ENCODE measurements at regions of chr19 and their contacts with region 1.

Region 1: DNA sequence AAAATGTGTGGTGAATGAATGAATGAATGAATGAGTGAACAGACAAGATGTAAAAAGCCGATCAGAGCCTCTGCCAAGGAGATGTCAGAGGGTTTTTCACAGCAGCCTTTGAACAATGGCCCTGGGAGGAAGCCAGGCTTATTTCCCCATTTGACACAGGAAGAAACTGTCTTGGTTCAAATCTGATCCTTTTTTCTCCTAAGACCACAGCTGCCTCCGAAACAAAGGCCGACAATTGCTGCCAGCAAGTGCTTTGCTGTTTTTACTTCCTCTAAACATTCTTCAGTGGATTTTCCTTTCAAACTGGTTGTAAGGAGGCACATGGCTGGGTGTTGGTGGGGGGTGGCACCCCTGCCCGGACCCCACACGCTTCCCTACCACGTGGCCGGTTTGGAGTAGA is 44.2 kb upstream of the HOMER3 start:
- DNase-seq: peak; percentile 87
- H3K4me3 ChIP-seq: no peak overlapping the region
- H3K27ac ChIP-seq: peak overlapping the region; percentile 39
- H3K4me1 ChIP-seq: peaks cover 20% of the 10 kb centered on the region
- H3K27me3 ChIP-seq: no peaks in the 10 kb centered on the region
- CTCF ChIP-seq: no peak

Region 2: DNA sequence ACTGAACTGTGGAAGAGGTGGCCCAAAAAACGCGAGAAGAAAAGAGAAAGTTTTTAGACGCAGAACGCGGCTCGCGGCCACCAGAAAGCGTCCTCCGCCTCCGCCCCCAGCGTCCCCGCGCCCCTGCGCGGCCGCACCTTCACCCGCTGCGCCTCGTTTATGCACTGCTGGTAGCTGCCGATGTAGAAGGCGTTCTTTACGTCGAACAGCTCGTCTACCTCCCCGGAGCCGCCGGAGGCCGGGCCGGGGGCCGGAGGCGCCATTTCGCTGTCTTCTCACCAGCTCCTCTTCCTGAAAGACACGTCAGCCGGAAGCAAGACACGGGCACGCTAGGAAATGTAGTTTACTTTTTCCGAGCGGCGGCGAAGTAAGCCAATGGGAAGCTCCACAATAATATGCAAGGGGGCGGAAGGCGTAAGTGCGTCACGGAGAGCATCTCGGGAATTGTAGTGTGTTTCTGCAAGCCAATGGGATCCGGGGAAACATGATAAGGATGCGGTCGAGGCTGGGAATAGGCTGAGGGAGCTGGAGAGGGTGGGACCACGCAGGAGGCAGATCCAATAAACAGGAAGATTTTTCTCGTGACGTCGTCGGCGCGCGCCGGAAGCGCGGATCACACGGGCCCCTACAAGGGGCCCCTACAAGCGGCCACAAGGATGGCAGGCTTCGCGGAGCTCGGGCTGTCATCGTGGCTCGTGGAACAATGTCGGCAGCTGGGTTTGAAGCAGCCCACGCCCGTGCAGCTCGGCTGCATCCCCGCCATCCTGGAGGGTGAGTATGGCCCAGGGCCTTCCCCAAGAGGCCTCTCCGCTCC is 66.0 kb before region 1 on chr19 and contains the starts of genes COPE and DDX49:
- CTCF ChIA-PET with region 1: interaction called, 8 read pairs
- POLR2A ChIA-PET with region 1: no interaction called
- intact Hi-C with region 1: loop called (anchors 2 kb)
- DNase-seq: peak; percentile 100
- H3K4me3 ChIP-seq: peak within 1 kb of the TSS; percentile 77
- H3K27ac ChIP-seq: peak within 1 kb of the TSS; percentile 89
- H3K4me1 ChIP-seq: peaks cover 6% of the 10 kb centered on the region
- H3K27me3 ChIP-seq: no peaks in the 10 kb centered on the region
- CTCF ChIP-seq: no peak
- total RNA-seq, gene COPE: 244 and 267 TPM in 2 replicates
- total RNA-seq, gene DDX49: 61.1 and 68.8 TPM in 2 replicates

Region 3: GRCh38 chr19:18932216-18932841 is 52.9 kb before region 1 on chr19:
- CTCF ChIA-PET with region 1: no interaction called
- POLR2A ChIA-PET with region 1: no interaction called
- intact Hi-C with region 1: no loop called
- DNase-seq: peak; percentile 66
- H3K4me3 ChIP-seq: no peak overlapping the region
- H3K27ac ChIP-seq: no peak overlapping the region
- H3K4me1 ChIP-seq: no peaks in the 10 kb centered on the region
- H3K27me3 ChIP-seq: no peaks in the 10 kb centered on the region
- CTCF ChIP-seq: no peak

Region 4: DNA sequence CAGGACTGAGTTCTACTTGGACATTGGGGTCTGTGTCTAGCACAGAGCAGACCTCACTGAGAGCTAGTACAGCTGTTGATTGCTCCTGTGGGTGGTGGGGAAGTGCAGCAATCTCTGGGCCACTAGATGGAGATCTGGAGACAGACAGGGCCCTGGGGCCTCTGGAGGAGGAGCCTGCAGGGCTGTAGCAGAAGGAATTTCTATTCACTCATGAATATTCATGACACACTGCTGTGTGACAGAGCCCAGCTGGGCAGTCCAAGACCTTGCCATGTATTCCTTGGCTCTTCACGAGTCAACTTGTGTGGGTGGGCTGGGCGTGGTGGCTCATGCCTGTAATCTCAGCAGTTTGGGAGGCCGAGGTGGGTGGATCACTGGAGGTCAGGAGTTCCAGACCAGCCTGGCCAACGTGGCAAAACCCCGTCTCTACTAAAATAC is 10.6 kb after region 1 on chr19:
- CTCF ChIA-PET with region 1: interaction called, 10 read pairs
- POLR2A ChIA-PET with region 1: no interaction called
- intact Hi-C with region 1: no loop called
- DNase-seq: peak; percentile 97
- H3K4me3 ChIP-seq: no peak overlapping the region
- H3K27ac ChIP-seq: peak overlapping the region; percentile 67
- H3K4me1 ChIP-seq: peaks cover 10% of the 10 kb centered on the region
- H3K27me3 ChIP-seq: no peaks in the 10 kb centered on the region
- CTCF ChIP-seq: peak; percentile 89

Region 5: GRCh38 chr19:19170053-19170872 is 185.0 kb after region 1 on chr19 and contains the start of gene MEF2B:
- CTCF ChIA-PET with region 1: interaction called, 10 read pairs
- POLR2A ChIA-PET with region 1: no interaction called
- intact Hi-C with region 1: no loop called
- DNase-seq: peak; percentile 86
- H3K4me3 ChIP-seq: peak within 1 kb of the TSS; percentile 19
- H3K27ac ChIP-seq: no peak within 1 kb of the TSS
- H3K4me1 ChIP-seq: peaks cover 12% of the 10 kb centered on the region
- H3K27me3 ChIP-seq: no peaks in the 10 kb centered on the region
- CTCF ChIP-seq: no peak
- total RNA-seq, gene MEF2B: 2.9 and 3.4 TPM in 2 replicates

Region 6: GRCh38 chr19:19211499-19212432 is 226.5 kb after region 1 on chr19 and contains the start of gene NCAN:
- CTCF ChIA-PET with region 1: no interaction called
- POLR2A ChIA-PET with region 1: no interaction called
- intact Hi-C with region 1: no loop called
- DNase-seq: no peak
- H3K4me3 ChIP-seq: peak within 1 kb of the TSS; percentile 24
- H3K27ac ChIP-seq: no peak within 1 kb of the TSS
- H3K4me1 ChIP-seq: peaks cover 5% of the 10 kb centered on the region
- H3K27me3 ChIP-seq: peaks cover 36% of the 10 kb centered on the region
- CTCF ChIP-seq: no peak
- total RNA-seq, gene NCAN: not detected in 2 replicates